ENCODE measurements at regions of chr1 and their contacts with region 1.

Region 1: GRCh38 chr1:70247768-70248167 is 26.6 kb downstream of the SRSF11 start:
- DNase-seq: no peak
- H3K4me3 ChIP-seq: no peak overlapping the region
- H3K4me3 Mint-ChIP-seq: no peak overlapping the region
- H3K27ac ChIP-seq: no peak overlapping the region
- H3K27ac Mint-ChIP-seq: no peak overlapping the region
- H3K4me1 ChIP-seq: no peaks in the 10 kb centered on the region
- H3K4me1 Mint-ChIP-seq: no peaks in the 10 kb centered on the region
- H3K27me3 ChIP-seq: no peaks in the 10 kb centered on the region
- H3K27me3 Mint-ChIP-seq: no peaks in the 10 kb centered on the region
- CTCF ChIP-seq: no peak

Region 2: GRCh38 chr1:70809069-70809468 is 561.3 kb after region 1 on chr1:
- intact Hi-C with region 1: no loop called
- DNase-seq: no peak
- H3K4me3 ChIP-seq: no peak overlapping the region
- H3K4me3 Mint-ChIP-seq: no peak overlapping the region
- H3K27ac ChIP-seq: no peak overlapping the region
- H3K27ac Mint-ChIP-seq: no peak overlapping the region
- H3K4me1 ChIP-seq: no peaks in the 10 kb centered on the region
- H3K4me1 Mint-ChIP-seq: peaks cover 4% of the 10 kb centered on the region
- H3K27me3 ChIP-seq: no peaks in the 10 kb centered on the region
- H3K27me3 Mint-ChIP-seq: no peaks in the 10 kb centered on the region
- CTCF ChIP-seq: no peak

Region 3: DNA sequence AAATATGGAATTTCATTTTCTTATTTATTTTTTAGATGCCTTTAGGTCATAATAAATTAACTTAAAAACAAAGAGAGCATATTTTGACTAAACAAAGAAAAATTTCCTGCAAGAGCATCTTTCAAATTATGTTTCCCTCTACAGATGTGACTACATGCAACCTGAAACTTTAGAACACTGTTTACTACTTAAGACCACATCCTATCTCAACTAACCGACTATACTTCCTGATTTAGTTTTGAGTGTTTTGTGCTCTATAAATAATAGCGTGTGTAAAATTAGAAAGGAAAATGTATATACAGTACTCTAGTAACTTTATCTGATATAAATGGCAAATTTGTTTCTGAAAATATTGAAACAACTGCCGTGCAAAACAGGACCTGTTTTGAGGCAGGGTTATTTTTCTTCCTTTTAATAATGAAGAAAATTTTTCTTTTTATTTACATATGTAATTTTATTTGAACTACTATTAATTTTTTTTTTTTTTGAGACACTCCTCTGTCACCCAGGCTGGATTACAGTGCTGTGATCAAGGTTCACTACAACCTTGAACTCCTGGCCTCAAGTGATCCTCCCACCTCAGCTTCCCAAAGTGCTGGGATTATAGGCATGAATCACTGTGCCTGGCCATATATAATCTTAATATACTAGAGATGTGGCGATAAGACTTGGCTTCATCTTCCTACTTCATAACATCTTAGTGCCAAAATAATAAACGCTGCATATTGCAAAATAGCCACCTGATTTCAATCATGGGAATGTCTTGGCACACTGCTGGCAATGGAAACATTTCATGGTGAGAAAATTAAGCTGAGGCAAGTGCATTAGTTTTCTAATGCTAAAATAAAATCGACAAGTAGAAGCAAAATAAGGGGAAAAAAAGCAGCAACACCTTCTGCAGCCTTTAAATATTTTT is 820.8 kb after region 1 on chr1:
- intact Hi-C with region 1: loop called in 1 of 2 experiments (anchors 10 kb)
- DNase-seq: no peak
- H3K4me3 ChIP-seq: no peak overlapping the region
- H3K4me3 Mint-ChIP-seq: no peak overlapping the region
- H3K27ac ChIP-seq: no peak overlapping the region
- H3K27ac Mint-ChIP-seq: peak overlapping the region in 1 of 7 donors; percentile 36
- H3K4me1 ChIP-seq: no peaks in the 10 kb centered on the region
- H3K4me1 Mint-ChIP-seq: no peaks in the 10 kb centered on the region
- H3K27me3 ChIP-seq: no peaks in the 10 kb centered on the region
- H3K27me3 Mint-ChIP-seq: no peaks in the 10 kb centered on the region
- CTCF ChIP-seq: no peak

Measured in CD14-positive monocyte (primary cell).